Activated T-helper 1 cell treated with anti-CD3 and anti-CD28 coated beads, Interleukin-12 subunit alpha, Interleukin-12 subunit beta, Interleukin-2, Interleukin-4 antibody, amounts not matched to agents 30 ng/mL and 10 ng/mL and 1 ng/mL, durations not matched to agents 14 hours and 24 hours and 36 hours (primary cell): ENCODE measurements at regions of chr7 and their contacts with region 1.

Region 1: DNA sequence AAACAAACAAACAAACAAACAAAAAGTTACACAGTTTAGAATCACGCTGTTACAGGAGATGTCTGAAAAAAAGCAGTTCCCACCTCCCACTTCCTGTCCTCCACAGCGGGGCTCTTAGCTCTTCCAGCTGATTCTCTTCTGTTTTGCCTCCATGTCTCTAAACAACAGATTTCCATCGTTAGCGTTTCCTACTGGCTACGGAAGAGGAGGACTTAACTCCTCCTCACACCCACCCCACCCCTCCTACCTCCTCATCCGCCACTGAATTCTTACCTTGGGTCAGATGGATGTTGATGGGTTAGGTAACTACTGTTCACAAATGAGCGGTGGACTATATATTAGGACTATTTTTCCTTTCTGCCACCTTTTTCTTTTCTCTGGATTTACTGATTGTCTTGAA is 36.8 kb upstream of the NUB1 start:
- DNase-seq: no peak
- H3K4me3 Mint-ChIP-seq: peak overlapping the region; percentile 31
- H3K27ac Mint-ChIP-seq: no peak overlapping the region
- H3K4me1 Mint-ChIP-seq: peaks cover 14% of the 10 kb centered on the region
- H3K27me3 Mint-ChIP-seq: peaks cover 33% of the 10 kb centered on the region

Region 2: GRCh38 chr7:149701495-149702240 is 1603.2 kb before region 1 on chr7:
- intact Hi-C with region 1: no loop called
- DNase-seq: no peak
- H3K4me3 Mint-ChIP-seq: no peak overlapping the region
- H3K27ac Mint-ChIP-seq: no peak overlapping the region
- H3K4me1 Mint-ChIP-seq: no peaks in the 10 kb centered on the region
- H3K27me3 Mint-ChIP-seq: peaks cover 7% of the 10 kb centered on the region

Region 3: DNA sequence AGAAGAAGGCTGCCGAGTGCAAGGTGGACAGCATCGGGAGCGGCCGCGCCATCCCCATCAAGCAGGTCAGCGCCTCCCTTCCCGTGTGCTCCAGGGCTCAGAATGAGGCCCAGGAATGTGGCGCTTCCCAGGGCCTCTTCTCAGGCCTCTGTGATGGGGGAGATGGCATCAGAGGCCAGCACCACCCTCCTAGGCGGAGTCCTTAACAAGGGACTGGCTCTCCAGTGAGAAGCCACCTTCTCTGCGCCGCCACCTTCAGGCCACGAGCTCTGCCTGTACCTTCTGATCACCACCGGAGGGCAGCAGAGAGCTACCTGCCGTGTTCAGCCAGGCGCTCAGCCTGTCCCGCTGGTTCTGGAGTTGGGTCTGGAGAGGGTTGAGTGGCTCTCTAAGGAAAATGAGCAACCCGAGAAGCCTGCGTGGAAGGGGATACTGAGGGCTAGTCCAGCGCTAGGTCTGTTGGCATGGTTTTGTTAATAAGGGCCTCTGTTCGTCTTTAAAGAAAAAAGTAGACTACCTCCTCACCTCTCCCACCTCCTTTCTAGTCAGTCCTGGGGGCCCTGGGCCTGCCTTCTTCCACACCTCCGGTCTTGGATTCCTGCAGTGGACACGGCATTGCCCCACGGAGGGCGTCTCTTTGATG is 180.9 kb before region 1 on chr7:
- intact Hi-C with region 1: loop called (anchors 1 kb)
- DNase-seq: peak; percentile 71
- H3K4me3 Mint-ChIP-seq: no peak overlapping the region
- H3K27ac Mint-ChIP-seq: no peak overlapping the region
- H3K4me1 Mint-ChIP-seq: no peaks in the 10 kb centered on the region
- H3K27me3 Mint-ChIP-seq: no peaks in the 10 kb centered on the region

Region 4: GRCh38 chr7:151244196-151244840 is 60.5 kb before region 1 on chr7:
- intact Hi-C with region 1: loop called (anchors 1 kb)
- DNase-seq: peak; percentile 49
- H3K4me3 Mint-ChIP-seq: peak overlapping the region; percentile 49
- H3K27ac Mint-ChIP-seq: no peak overlapping the region
- H3K4me1 Mint-ChIP-seq: peaks cover 26% of the 10 kb centered on the region
- H3K27me3 Mint-ChIP-seq: peaks cover 32% of the 10 kb centered on the region

Region 5: DNA sequence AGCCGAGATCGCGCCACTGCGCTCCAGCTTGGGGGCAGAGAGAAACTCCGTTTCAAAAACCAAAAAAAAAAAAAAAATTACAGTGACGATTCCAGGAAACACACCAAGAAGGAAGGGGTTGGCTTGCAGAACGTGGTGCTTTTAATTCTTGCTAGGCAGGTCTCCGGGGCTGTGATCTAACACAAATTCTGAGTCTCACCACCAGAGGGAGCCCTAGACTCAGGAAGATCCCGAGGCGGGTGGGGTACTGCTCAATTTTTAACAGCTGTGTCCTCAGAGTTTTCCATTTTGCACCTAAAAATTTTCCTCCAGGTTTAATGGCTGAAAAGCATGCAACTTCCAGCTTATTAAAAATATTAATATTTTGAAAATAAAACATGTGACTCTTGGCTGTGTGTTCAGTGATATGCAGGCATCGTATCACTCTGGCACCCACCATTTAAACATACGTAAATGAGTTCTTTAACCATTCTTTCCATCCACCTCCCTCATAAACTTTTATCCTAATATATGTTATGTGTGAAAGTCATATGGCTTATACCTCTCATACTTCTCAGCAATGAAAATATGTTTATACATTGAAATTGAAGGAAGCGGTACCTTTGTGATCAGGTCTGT is 10.3 kb after region 1 on chr7:
- intact Hi-C with region 1: loop called (anchors 1 kb)
- DNase-seq: peak; percentile 68
- H3K4me3 Mint-ChIP-seq: no peak overlapping the region
- H3K27ac Mint-ChIP-seq: no peak overlapping the region
- H3K4me1 Mint-ChIP-seq: peaks cover 9% of the 10 kb centered on the region
- H3K27me3 Mint-ChIP-seq: no peaks in the 10 kb centered on the region

Region 6: DNA sequence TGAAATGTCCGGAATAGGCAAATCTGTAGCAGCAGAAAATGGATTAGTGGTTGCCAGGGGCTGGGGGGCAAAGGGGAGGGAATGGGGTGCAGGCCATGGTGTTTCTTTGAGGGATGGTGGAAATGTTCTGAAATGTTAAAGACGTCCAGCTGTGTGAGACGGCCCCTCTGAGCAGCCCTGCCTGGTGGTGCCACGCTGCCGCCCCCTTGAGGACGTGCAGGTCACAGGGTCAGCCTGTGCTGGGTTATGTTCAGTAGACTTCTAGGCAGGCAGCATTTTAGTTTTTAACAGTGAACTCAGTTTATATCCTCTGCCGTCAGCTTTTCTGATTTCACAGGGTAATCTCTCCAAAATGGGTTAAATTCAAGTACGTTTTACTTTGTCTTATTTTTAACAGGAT is 46.2 kb after region 1 on chr7:
- intact Hi-C with region 1: no loop called
- DNase-seq: no peak
- H3K4me3 Mint-ChIP-seq: peak overlapping the region; percentile 65
- H3K27ac Mint-ChIP-seq: peak overlapping the region; percentile 93
- H3K4me1 Mint-ChIP-seq: peaks cover 39% of the 10 kb centered on the region
- H3K27me3 Mint-ChIP-seq: no peaks in the 10 kb centered on the region

Region 7: DNA sequence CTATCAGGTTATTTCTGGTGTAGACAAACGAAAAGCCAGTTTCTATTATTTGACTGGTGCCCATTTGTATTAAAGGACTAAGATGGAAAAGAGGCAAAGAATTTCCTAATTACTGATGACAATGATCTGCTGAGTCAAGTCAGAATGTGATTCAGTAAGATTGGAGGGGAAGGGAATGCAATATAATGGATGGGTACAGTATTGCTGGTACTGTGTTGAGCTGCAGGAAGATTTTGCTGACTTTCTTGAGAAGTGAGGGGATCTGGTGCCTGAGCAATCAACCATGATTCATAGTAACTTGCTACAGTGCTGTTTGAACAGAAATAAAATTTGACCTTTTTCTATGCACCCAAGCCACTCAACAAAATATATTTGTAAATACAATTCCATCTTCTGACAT is 353.9 kb after region 1 on chr7:
- intact Hi-C with region 1: no loop called
- DNase-seq: no peak
- H3K4me3 Mint-ChIP-seq: no peak overlapping the region
- H3K27ac Mint-ChIP-seq: no peak overlapping the region
- H3K4me1 Mint-ChIP-seq: no peaks in the 10 kb centered on the region
- H3K27me3 Mint-ChIP-seq: peaks cover 8% of the 10 kb centered on the region